Vagina (tissue), 2 donors: ENCODE measurements at regions of chr4 and their contacts with region 1.

Region 1: GRCh38 chr4:18749391-18749790 is 727.8 kb upstream of the LCORL start:
- DNase-seq: no peak
- H3K4me3 ChIP-seq: no peak overlapping the region
- H3K27ac ChIP-seq: no peak overlapping the region
- H3K4me1 ChIP-seq: no peaks in the 10 kb centered on the region
- H3K27me3 ChIP-seq: no peaks in the 10 kb centered on the region
- CTCF ChIP-seq: no peak
- POLR2A ChIP-seq: no peak

Region 2: GRCh38 chr4:20603671-20604293 is 1854.4 kb after region 1 on chr4:
- intact Hi-C with region 1: no loop called
- DNase-seq: no peak
- H3K4me3 ChIP-seq: no peak overlapping the region
- H3K27ac ChIP-seq: no peak overlapping the region
- H3K4me1 ChIP-seq: no peaks in the 10 kb centered on the region
- H3K27me3 ChIP-seq: no peaks in the 10 kb centered on the region
- CTCF ChIP-seq: no peak
- POLR2A ChIP-seq: no peak

Region 3: DNA sequence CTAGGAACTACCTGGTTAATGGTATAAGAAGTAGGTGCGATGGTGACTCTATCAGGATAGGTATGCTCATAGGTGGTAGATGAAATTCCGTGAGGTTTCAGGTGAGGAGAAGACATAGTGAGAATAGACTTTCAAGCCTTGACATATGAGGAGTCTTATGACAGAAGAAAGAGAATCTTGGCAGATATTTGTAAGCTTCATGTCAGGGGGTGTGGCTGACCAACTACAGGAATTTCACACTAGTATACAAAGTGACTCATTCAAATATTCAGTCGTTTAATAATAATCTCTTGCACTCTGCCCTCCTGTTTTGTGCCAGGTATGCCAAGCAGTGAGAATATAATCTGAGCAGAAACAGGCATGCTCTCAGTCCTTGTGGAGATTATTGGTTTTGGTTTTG is 1973.6 kb after region 1 on chr4:
- intact Hi-C with region 1: loop called (anchors 5 kb)
- DNase-seq: no peak
- H3K4me3 ChIP-seq: no peak overlapping the region
- H3K27ac ChIP-seq: no peak overlapping the region
- H3K4me1 ChIP-seq: no peaks in the 10 kb centered on the region
- H3K27me3 ChIP-seq: no peaks in the 10 kb centered on the region
- CTCF ChIP-seq: no peak
- POLR2A ChIP-seq: no peak